ENCODE measurements at regions of chr1 and their contacts with region 1.

Region 1: DNA sequence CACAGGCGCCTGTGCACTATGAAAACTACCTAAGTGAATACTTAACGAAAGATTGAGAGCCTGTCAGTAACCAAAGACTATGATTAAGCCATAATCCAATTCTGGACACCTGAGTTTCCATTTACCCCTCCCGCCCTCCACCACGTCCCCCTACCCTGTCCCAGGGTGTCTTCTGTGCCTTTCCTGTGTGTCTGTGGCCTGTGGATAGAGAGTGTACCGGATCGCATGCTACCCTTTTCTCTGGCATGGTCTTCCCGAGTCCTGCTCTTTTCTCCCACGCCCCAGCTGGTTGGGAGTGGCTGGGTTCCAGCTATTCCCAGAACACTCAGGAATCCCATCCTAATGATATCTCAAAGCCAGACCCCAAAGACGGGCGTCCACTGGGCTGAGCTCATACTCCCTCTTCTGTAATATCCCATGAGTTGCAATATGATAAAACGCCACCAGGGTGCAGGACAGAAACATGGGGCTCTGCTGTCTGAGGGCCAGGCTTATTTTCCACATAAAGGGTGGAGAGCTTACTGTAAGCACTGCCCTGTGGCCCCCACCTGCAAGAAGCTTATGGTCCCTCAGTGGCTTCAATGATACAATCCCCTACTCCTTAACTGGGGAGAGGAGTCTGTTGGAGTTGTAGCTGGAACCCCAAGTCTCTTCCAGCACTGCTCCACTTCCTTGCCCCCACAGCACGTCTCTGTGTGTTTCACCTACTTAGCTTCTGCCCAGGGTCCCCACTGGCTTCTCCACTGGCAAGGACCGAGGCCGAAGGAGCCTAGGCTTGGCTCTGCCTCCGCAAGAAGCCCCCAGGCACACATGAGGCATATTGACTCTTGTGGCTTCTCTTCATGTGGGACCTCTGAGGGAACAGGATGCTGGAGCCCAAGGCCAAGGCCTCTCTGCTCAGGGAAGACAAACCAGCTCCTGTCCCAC is 17.6 kb upstream of the ALX3 start:
- DNase-seq: peak; percentile 31
- ATAC-seq: peak; percentile 98
- H3K4me3 ChIP-seq: no peak overlapping the region
- H3K27ac ChIP-seq: no peak overlapping the region
- H3K4me1 ChIP-seq: no peaks in the 10 kb centered on the region
- H3K27me3 ChIP-seq: peaks cover 9% of the 10 kb centered on the region; the same call in 1 of the 2 replicates
- CTCF ChIP-seq: peak; percentile 58 to 74 (median 70)
- POLR2A ChIP-seq: no peak
- RAD21 ChIP-seq: peak; percentile 67

Region 2: GRCh38 chr1:110060034-110060661 is 27.9 kb before region 1 on chr1:
- CTCF ChIA-PET with region 1: interaction called, 10 read pairs
- POLR2A ChIA-PET with region 1: no interaction called
- RAD21 ChIA-PET with region 1: no interaction called
- intact Hi-C with region 1: no loop called
- DNase-seq: no peak
- ATAC-seq: peak; percentile 93
- H3K4me3 ChIP-seq: no peak overlapping the region
- H3K27ac ChIP-seq: no peak overlapping the region
- H3K4me1 ChIP-seq: no peaks in the 10 kb centered on the region
- H3K27me3 ChIP-seq: no peaks in the 10 kb centered on the region
- CTCF ChIP-seq: peak; percentile 38 to 98 (median 95); a peak in 5 of 6 replicates
- POLR2A ChIP-seq: no peak
- RAD21 ChIP-seq: no peak

Region 3: DNA sequence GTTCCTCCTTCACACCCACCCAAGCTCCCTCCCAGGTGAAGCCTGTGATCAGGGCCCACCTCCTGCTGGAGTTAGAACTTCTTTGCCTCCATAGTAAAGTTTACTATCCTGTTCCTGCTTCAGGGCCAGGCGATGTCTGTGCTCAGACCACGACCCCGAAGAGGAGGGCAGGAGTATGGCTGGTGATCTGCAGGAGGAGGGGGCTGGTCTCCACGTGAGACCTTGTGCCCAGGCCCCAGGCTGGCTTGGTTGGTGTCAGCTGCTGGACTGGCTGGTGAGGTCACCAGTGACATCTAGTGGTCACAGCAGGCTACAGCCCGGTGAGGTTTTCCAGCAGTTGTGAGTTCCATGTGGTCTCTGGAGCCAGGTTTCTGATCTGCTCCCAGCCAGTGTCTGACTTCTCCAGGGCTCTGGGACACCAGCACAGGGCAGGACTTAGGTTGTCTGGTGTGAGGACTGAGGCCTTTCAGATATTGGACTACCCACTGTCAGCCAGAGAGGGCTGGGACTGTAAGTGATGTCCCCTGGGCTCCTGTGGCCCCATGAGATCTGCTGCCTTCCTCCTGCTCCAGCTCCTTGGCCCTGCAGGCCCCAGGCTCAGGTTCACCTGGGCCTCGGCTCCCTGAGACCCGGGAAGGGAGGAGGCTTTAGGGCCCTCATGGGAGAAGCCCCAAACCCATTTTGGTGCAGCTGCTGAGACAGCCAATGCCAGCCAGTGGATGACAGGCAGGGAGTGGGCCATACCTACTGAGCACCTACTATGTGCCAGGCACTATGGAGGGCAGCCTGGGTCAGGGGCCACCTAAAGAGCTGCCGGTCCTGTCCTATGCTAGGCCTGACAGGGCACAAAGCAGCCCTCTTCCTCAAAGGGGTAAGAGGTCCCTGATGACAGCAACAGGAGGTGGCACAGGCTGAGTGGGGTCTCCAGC is 18.2 kb after region 1 on chr1:
- CTCF ChIA-PET with region 1: interaction called, 57 read pairs
- POLR2A ChIA-PET with region 1: no interaction called
- RAD21 ChIA-PET with region 1: interaction called in 1 of 2 experiments, 4 read pairs
- intact Hi-C with region 1: no loop called
- DNase-seq: peak; percentile 35
- ATAC-seq: peak; percentile 99
- H3K4me3 ChIP-seq: no peak overlapping the region
- H3K27ac ChIP-seq: no peak overlapping the region
- H3K4me1 ChIP-seq: peaks cover 0 to 4% of the 10 kb centered on the region in 2 experiments; a peak in 1 of 4 replicates
- H3K27me3 ChIP-seq: peaks cover 3% of the 10 kb centered on the region; the same call in 1 of the 2 replicates
- CTCF ChIP-seq: peak; percentile 65 to 95 (median 94)
- POLR2A ChIP-seq: no peak
- RAD21 ChIP-seq: peak; percentile 86

Region 4: DNA sequence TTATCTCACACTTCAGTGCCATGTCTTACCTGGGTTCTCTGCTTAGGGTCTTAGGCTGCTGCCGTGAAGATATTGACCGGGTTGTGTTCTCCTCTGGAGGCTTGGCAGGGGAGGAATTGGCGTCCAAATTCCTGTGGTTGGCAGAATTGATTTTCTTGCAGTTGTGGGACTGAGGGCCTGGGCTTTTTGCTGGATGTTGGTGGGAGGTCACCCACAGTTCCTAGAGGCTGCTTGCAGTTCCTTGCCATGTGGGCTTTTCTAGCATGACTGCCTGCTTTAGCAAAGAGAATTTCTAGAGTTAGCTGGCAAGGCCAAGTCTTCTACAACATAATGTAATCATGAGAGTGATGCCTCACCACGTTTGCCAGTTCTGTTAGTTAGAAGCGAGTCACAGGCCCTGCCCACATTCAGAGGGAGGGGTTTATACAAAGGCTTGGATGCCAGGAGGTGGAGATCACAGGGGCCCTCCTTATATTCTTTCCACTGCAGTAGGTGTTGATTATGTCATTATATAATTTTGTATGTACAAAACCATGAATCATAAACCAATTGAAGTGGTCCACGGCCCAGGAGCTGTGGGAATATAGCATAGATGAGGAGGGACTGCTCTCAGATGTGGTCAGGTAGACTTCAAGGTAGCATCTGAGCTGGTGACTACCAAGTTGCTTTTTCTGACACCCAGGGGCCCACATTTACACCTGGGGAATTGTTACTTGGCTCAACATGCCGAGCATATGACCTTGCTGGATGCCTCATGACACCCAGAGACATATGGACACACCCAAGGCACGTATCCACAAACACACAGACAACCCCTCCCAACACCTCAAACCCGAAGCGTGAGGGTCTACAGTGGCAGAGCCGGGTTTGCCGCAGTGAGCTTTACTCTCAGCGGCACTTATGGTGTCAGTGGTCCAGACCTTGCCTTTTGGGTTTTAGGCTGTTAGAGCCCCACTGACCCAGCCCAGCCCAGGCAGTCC is 30.9 kb after region 1 on chr1:
- CTCF ChIA-PET with region 1: interaction called, 10 read pairs
- POLR2A ChIA-PET with region 1: no interaction called
- RAD21 ChIA-PET with region 1: no interaction called
- intact Hi-C with region 1: no loop called
- DNase-seq: no peak
- ATAC-seq: peak; percentile 52; the same call in 1 of the 2 replicates
- H3K4me3 ChIP-seq: no peak overlapping the region
- H3K27ac ChIP-seq: no peak overlapping the region
- H3K4me1 ChIP-seq: peaks cover 0 to 11% of the 10 kb centered on the region in 2 experiments; a peak in 2 of 4 replicates
- H3K27me3 ChIP-seq: peaks cover 2% of the 10 kb centered on the region; the same call in 1 of the 2 replicates
- CTCF ChIP-seq: no peak
- POLR2A ChIP-seq: no peak
- RAD21 ChIP-seq: no peak

Measured in HCT116 (cell line).